CD4-positive, alpha-beta memory T cell (primary cell): ENCODE measurements at regions of chr16 and their contacts with region 1.

Region 1: GRCh38 chr16:77584205-77584859 is 138.0 kb upstream of the NUDT7 start:
- DNase-seq: peak in 4 of 5 donors; percentile 28 to 45 (median 34)
- H3K4me3 ChIP-seq: no peak overlapping the region
- H3K4me3 Mint-ChIP-seq: no peak overlapping the region
- H3K27ac ChIP-seq: no peak overlapping the region
- H3K27ac Mint-ChIP-seq: no peak overlapping the region
- H3K4me1 ChIP-seq: no peaks in the 10 kb centered on the region
- H3K4me1 Mint-ChIP-seq: no peaks in the 10 kb centered on the region
- H3K27me3 ChIP-seq: no peaks in the 10 kb centered on the region
- H3K27me3 Mint-ChIP-seq: peaks cover 7 to 35% of the 10 kb centered on the region in 2 donors

Region 2: DNA sequence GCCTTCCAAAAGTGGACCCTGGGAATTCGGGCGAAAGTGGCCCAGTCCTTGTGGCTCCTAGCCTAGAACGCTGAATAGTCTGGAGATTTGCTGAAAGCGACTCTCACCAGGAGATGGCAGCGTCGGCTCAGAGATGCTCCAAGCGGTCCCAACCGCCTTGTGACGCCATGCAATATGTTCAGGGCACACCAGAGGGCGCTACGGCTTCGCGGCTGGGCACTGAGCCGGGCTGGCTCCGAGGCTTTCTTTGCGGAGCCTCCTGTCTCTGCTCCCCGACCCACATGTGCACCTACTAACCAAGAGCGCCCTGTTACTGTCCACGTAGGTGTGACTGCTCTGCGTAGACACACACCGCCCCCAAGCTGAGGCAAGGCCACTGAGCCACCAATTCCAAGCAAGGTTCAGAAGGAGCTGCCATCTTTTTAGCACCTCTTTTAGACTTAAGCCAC is 348.2 kb before region 1 on chr16:
- CTCF ChIA-PET with region 1: interaction called, 216 read pairs
- POLR2A ChIA-PET with region 1: no interaction called
- intact Hi-C with region 1: loop called (anchors 1 kb)
- DNase-seq: peak; percentile 80 to 87 (median 83)
- H3K4me3 ChIP-seq: peak overlapping the region in 1 of 2 donors; percentile 39
- H3K4me3 Mint-ChIP-seq: peak overlapping the region; percentile 52 to 85 (median 73)
- H3K27ac ChIP-seq: no peak overlapping the region
- H3K27ac Mint-ChIP-seq: peak overlapping the region in 2 of 7 donors; percentile 28 to 37
- H3K4me1 ChIP-seq: no peaks in the 10 kb centered on the region
- H3K4me1 Mint-ChIP-seq: peaks cover 2 to 6% (median 5%) of the 10 kb centered on the region in 4 donors
- H3K27me3 ChIP-seq: no peaks in the 10 kb centered on the region
- H3K27me3 Mint-ChIP-seq: peaks cover 8 to 23% of the 10 kb centered on the region in 2 donors

Region 3: DNA sequence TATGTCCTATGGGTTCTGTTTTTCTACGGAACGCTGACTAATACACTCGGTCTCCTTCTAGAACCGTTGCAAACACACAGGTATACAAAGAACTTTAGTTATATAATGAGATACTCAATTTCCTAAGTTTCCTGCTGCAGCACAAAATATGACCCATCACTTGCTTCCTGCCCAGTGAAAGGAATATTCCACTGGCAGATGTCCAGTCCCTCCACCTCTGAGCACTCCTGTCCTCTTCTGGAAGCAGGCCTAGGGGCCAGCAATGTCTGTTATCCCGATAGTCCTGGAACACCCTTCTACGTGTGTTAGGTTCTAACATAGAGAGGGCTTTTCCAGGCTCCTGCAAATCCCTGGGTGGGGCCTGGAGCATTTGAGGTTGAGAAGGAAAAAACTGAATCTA is 182.2 kb before region 1 on chr16:
- CTCF ChIA-PET with region 1: no interaction called
- POLR2A ChIA-PET with region 1: no interaction called
- intact Hi-C with region 1: no loop called
- DNase-seq: no peak
- H3K4me3 ChIP-seq: no peak overlapping the region
- H3K4me3 Mint-ChIP-seq: no peak overlapping the region
- H3K27ac ChIP-seq: no peak overlapping the region
- H3K27ac Mint-ChIP-seq: no peak overlapping the region
- H3K4me1 ChIP-seq: no peaks in the 10 kb centered on the region
- H3K4me1 Mint-ChIP-seq: no peaks in the 10 kb centered on the region
- H3K27me3 ChIP-seq: no peaks in the 10 kb centered on the region
- H3K27me3 Mint-ChIP-seq: peaks cover 0 to 1% of the 10 kb centered on the region in 2 donors

Region 4: GRCh38 chr16:77596261-77596660 is 11.9 kb after region 1 on chr16:
- CTCF ChIA-PET with region 1: interaction called, 11 read pairs
- POLR2A ChIA-PET with region 1: no interaction called
- intact Hi-C with region 1: no loop called
- DNase-seq: no peak
- H3K4me3 ChIP-seq: no peak overlapping the region
- H3K4me3 Mint-ChIP-seq: no peak overlapping the region
- H3K27ac ChIP-seq: no peak overlapping the region
- H3K27ac Mint-ChIP-seq: no peak overlapping the region
- H3K4me1 ChIP-seq: no peaks in the 10 kb centered on the region
- H3K4me1 Mint-ChIP-seq: no peaks in the 10 kb centered on the region
- H3K27me3 ChIP-seq: no peaks in the 10 kb centered on the region
- H3K27me3 Mint-ChIP-seq: peaks cover 4 to 9% of the 10 kb centered on the region in 2 donors

Region 5: DNA sequence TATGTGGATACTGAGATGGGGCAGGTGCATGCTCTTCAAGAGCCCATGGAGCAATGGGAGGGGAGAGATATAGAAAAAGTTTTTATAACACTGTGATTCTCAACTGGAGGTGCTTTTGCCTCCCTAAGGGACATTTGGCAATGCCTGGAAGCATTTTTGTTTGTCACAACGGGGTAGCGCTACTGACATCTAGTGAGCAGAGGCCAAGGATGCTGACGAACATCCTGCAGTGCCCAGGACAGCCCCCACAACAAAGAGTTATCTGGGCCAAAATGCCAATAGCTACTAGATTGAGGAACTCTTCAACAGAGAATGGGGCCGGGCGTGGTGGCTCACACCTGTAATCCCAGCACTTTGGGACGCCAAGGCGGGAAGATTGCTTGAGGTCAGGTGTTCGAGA is 370.8 kb after region 1 on chr16:
- CTCF ChIA-PET with region 1: no interaction called
- POLR2A ChIA-PET with region 1: no interaction called
- intact Hi-C with region 1: no loop called
- DNase-seq: no peak
- H3K4me3 ChIP-seq: no peak overlapping the region
- H3K4me3 Mint-ChIP-seq: no peak overlapping the region
- H3K27ac ChIP-seq: no peak overlapping the region
- H3K27ac Mint-ChIP-seq: no peak overlapping the region
- H3K4me1 ChIP-seq: no peaks in the 10 kb centered on the region
- H3K4me1 Mint-ChIP-seq: no peaks in the 10 kb centered on the region
- H3K27me3 ChIP-seq: no peaks in the 10 kb centered on the region
- H3K27me3 Mint-ChIP-seq: peaks cover 9 to 13% of the 10 kb centered on the region in 2 donors